CD8-positive, alpha-beta T cell (primary cell): ENCODE measurements at regions of chr16 and their contacts with region 1.

Region 1: GRCh38 chr16:66562407-66562806 is 3.8 kb upstream of the CMTM1 start:
- DNase-seq: peak in 2 of 9 experiments; percentile 34 to 56
- ATAC-seq: peak; percentile 64
- H3K4me3 ChIP-seq: no peak overlapping the region
- H3K4me3 Mint-ChIP-seq: no peak overlapping the region
- H3K27ac ChIP-seq: peak overlapping the region in 1 of 2 experiments; percentile 58
- H3K27ac Mint-ChIP-seq: peak overlapping the region; percentile 49
- H3K4me1 ChIP-seq: peaks cover 9% of the 10 kb centered on the region
- H3K4me1 Mint-ChIP-seq: peaks cover 60% of the 10 kb centered on the region
- H3K27me3 ChIP-seq: no peaks in the 10 kb centered on the region
- H3K27me3 Mint-ChIP-seq: no peaks in the 10 kb centered on the region
- CTCF ChIP-seq: peak; percentile 61

Region 2: GRCh38 chr16:66406534-66407221 is 155.7 kb before region 1 on chr16:
- CTCF ChIA-PET with region 1: interaction called, 11 read pairs
- POLR2A ChIA-PET with region 1: no interaction called
- intact Hi-C with region 1: no loop called
- DNase-seq: peak; percentile 75 to 97 (median 87)
- ATAC-seq: peak; percentile 75
- H3K4me3 ChIP-seq: peak overlapping the region; percentile 60 to 66
- H3K4me3 Mint-ChIP-seq: peak overlapping the region; percentile 83
- H3K27ac ChIP-seq: no peak overlapping the region
- H3K27ac Mint-ChIP-seq: no peak overlapping the region
- H3K4me1 ChIP-seq: peaks cover 21% of the 10 kb centered on the region
- H3K4me1 Mint-ChIP-seq: peaks cover 26% of the 10 kb centered on the region
- H3K27me3 ChIP-seq: no peaks in the 10 kb centered on the region
- H3K27me3 Mint-ChIP-seq: peaks cover 5% of the 10 kb centered on the region
- CTCF ChIP-seq: peak; percentile 90

Region 3: DNA sequence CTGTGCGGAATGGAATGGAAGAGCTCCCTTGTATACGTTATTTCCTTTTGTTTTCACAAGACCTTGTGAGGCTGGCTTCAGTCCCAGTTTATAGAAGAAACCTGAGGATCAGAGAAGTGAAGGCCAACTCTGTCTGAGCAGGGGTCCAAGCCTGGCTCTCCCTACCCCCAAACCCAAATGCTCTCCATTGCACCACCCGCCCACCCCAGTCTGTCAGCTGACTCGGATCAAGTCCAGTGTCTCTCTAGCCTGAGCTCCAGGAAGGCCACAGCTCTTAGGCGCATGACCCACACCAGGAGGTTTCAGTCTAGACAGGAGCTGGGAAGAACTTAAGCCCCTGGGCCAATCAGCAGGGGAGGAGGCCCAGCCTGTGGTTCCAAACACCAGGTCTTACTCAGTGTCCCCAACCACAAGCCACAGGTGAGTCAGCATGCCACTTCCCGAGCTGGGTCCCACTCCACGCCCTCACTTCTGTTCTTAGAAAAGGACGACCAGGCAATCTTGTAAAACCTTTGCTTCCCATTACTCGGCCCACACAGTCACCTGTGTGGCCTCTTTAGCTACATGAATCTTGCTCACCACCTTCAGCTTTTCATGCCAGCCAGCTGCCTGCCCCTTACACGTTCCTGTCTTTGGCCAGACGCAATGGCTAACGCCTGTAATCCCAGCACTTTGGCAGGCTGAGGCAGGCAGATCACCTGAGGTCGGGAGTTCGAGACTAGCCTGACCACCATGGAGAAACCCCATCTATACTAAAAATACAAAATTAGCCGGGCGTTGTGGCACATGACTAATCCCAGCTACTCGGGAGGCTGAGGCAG is 40.2 kb before region 1 on chr16:
- CTCF ChIA-PET with region 1: interaction called, 22 read pairs
- POLR2A ChIA-PET with region 1: no interaction called
- intact Hi-C with region 1: no loop called
- DNase-seq: peak; percentile 17 to 91 (median 85)
- ATAC-seq: peak; percentile 82
- H3K4me3 ChIP-seq: peak overlapping the region in 1 of 2 experiments; percentile 21
- H3K4me3 Mint-ChIP-seq: peak overlapping the region; percentile 66
- H3K27ac ChIP-seq: peak overlapping the region in 1 of 2 experiments; percentile 58
- H3K27ac Mint-ChIP-seq: peak overlapping the region; percentile 95
- H3K4me1 ChIP-seq: peaks cover 72% of the 10 kb centered on the region
- H3K4me1 Mint-ChIP-seq: peaks cover 80% of the 10 kb centered on the region
- H3K27me3 ChIP-seq: no peaks in the 10 kb centered on the region
- H3K27me3 Mint-ChIP-seq: no peaks in the 10 kb centered on the region
- CTCF ChIP-seq: no peak

Region 4: DNA sequence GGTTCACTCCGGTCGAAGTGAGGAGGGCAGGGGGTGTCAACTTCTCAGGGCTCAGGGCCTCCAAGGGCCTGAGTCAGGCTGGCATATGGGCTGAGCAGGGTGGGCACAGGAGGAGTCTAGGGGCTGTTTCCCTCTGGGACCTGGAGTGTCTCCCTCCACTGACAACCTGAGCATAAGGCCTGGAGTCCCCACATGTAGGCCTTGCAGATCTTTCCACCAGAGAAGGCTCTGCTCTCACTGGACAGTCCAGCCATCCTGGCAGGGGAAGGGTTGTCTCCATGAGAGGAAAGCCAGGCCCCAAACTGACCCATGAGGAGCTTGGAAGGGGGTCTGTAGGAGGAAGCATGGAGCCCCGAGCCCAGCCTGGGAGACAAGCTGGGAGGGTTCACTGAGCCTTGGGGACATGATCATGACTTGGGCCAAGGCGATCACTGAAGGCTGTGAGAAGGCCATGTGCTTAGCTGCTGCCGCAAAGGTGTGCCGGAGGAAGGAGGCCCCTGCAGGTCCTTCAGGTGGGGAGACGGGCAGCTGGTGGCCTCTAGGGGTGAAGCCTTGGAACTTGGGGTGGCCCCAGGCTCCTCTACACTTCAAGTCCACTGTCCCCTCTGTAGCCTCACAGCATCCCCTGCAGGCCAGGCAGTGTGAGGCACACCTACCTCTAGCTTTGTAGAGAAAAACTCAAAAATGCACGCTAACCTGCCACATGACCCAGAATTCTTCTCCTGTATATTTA is 26.7 kb after region 1 on chr16:
- CTCF ChIA-PET with region 1: interaction called, 12 read pairs
- POLR2A ChIA-PET with region 1: interaction called, 4 read pairs
- intact Hi-C with region 1: loop called in 1 of 2 experiments (anchors 1 kb)
- DNase-seq: peak; percentile 45 to 85 (median 70)
- ATAC-seq: peak; percentile 94
- H3K4me3 ChIP-seq: no peak overlapping the region
- H3K4me3 Mint-ChIP-seq: peak overlapping the region; percentile 83
- H3K27ac ChIP-seq: no peak overlapping the region
- H3K27ac Mint-ChIP-seq: peak overlapping the region; percentile 49
- H3K4me1 ChIP-seq: peaks cover 25% of the 10 kb centered on the region
- H3K4me1 Mint-ChIP-seq: peaks cover 24% of the 10 kb centered on the region
- H3K27me3 ChIP-seq: no peaks in the 10 kb centered on the region
- H3K27me3 Mint-ChIP-seq: no peaks in the 10 kb centered on the region
- CTCF ChIP-seq: peak; percentile 71

Region 5: GRCh38 chr16:66728117-66728787 is 165.8 kb after region 1 on chr16:
- CTCF ChIA-PET with region 1: interaction called, 26 read pairs
- POLR2A ChIA-PET with region 1: no interaction called
- intact Hi-C with region 1: loop called (anchors 5 kb)
- DNase-seq: peak in 2 of 9 experiments; percentile 49 to 64
- ATAC-seq: peak; percentile 83
- H3K4me3 ChIP-seq: no peak overlapping the region
- H3K4me3 Mint-ChIP-seq: no peak overlapping the region
- H3K27ac ChIP-seq: no peak overlapping the region
- H3K27ac Mint-ChIP-seq: no peak overlapping the region
- H3K4me1 ChIP-seq: no peaks in the 10 kb centered on the region
- H3K4me1 Mint-ChIP-seq: peaks cover 4% of the 10 kb centered on the region
- H3K27me3 ChIP-seq: no peaks in the 10 kb centered on the region
- H3K27me3 Mint-ChIP-seq: no peaks in the 10 kb centered on the region
- CTCF ChIP-seq: peak; percentile 70